ENCODE measurements at regions of chr1 and their contacts with region 1.

Region 1: GRCh38 chr1:93304716-93305138 is 41.0 kb upstream of the DR1 start:
- DNase-seq: peak; percentile 48
- H3K4me3 ChIP-seq: no peak overlapping the region
- H3K27ac ChIP-seq: no peak overlapping the region
- H3K27me3 ChIP-seq: no peaks in the 10 kb centered on the region
- CTCF ChIP-seq: peak; percentile 90

Region 2: DNA sequence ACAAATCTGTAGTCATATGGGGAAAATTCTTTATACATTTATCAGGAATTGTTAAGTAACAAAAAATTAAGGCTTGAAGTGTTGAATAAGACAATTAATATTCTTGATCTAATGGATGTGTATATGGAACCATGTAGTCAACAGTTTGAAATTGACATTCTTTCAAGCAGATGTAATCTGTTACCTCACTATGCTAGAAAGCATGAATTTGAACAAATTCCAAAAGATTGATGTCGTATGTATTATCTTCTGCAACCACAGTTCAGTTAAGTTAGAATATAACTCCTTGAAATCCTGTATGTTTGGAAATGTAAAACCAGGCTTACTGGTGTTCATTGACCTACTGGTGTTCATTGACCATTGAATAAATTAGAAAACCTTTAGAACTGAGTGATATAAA is 108.1 kb before region 1 on chr1:
- CTCF ChIA-PET with region 1: no interaction called
- POLR2A ChIA-PET with region 1: no interaction called
- DNase-seq: peak; percentile 30
- H3K4me3 ChIP-seq: no peak overlapping the region
- H3K27ac ChIP-seq: no peak overlapping the region
- H3K27me3 ChIP-seq: no peaks in the 10 kb centered on the region
- CTCF ChIP-seq: no peak

Region 3: DNA sequence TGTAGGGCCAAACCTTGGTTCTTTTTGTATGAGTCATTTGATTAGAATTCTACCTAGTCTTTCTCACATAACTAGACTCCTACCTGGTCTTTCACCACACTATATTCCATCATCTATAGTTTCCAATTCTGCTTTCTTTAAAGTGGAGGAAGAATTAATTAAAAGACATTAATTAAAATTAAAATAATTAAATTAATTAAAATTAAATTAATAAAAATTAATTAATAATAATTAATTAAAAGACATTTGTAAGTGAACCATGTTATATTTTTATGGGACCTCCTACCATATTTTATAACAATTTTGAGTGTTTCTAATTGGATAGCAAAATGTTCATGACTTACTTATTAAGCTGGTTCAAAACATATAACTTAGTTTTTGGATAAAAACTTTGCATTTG is 46.8 kb before region 1 on chr1:
- CTCF ChIA-PET with region 1: interaction called, 13 read pairs
- POLR2A ChIA-PET with region 1: no interaction called
- DNase-seq: no peak
- H3K4me3 ChIP-seq: no peak overlapping the region
- H3K27ac ChIP-seq: no peak overlapping the region
- H3K27me3 ChIP-seq: no peaks in the 10 kb centered on the region
- CTCF ChIP-seq: no peak

Region 4: DNA sequence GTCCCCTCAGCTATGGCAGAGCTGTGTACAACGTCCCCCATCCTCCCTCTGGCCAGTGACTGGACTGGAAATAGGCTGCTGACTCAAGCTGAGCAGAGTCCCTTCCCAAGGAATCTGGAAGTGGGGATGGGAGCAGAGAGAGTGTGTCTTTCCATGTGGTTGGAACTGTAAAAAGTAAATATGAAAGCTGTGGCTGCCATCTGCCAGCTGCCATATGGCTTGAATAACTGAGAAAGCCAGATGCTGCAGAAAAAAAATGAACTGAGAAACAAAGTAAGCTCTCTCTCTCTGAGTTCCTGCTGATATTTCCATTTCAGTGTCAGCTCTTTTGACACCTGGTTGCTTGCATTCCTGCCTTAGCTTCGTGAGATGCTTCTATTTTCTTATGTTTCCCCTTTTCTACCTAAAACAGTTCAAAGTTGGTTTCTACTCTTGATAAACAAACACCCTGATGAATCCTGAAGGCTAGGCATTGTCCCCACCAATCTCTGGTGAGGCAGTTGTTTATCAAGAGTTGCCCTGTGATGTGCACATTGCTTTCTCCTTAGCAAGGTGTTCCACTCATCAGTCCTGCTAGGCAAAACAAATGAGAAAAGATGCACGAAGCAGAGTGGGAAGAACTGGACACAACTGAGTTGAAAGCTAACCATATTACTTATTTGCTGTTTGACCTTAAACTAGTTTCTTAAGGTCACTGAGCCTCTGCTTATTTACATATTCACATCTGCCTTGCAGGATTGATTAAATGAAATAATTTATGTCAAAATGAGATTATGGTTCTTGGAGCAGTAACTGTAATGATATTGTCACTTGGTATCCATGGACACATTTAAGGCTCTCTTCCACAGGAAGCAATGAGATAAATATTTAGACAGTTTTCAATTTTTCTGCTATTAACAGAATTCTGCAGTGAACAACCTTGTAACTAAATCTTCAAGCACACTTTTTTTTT is 24.4 kb after region 1 on chr1:
- CTCF ChIA-PET with region 1: interaction called, 48 read pairs
- POLR2A ChIA-PET with region 1: interaction called, 3 read pairs
- DNase-seq: peak; percentile 30
- H3K4me3 ChIP-seq: no peak overlapping the region
- H3K27ac ChIP-seq: peak overlapping the region; percentile 49
- H3K27me3 ChIP-seq: no peaks in the 10 kb centered on the region
- CTCF ChIP-seq: no peak

Region 5: DNA sequence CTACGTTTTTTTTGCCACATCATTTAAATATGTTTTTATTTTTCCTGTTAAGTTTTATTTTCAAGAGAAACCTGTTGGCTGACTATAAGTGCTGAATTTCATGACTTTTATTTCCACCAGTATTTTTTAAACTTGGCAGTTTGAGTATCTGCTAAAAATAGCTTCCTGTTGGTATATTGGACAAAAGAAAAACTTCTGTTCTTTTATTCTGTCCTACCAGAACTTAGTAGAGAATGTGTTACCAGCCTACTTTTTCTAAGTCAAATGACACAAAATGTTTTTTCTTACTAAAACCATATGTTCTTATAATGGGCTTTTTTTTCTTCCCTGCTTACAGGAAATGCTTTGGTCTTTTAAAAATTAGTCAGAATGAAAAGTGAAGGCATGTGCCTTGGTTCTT is 48.6 kb after region 1 on chr1:
- CTCF ChIA-PET with region 1: interaction called, 17 read pairs
- POLR2A ChIA-PET with region 1: no interaction called
- DNase-seq: no peak
- H3K4me3 ChIP-seq: no peak overlapping the region
- H3K27ac ChIP-seq: no peak overlapping the region
- H3K27me3 ChIP-seq: no peaks in the 10 kb centered on the region
- CTCF ChIP-seq: no peak

Region 6: GRCh38 chr1:93437976-93438605 is 133.4 kb after region 1 on chr1:
- CTCF ChIA-PET with region 1: interaction called, 13 read pairs
- POLR2A ChIA-PET with region 1: no interaction called
- DNase-seq: peak; percentile 20
- H3K4me3 ChIP-seq: no peak overlapping the region
- H3K27ac ChIP-seq: no peak overlapping the region
- H3K27me3 ChIP-seq: peaks cover 17% of the 10 kb centered on the region
- CTCF ChIP-seq: peak; percentile 62

Region 7: DNA sequence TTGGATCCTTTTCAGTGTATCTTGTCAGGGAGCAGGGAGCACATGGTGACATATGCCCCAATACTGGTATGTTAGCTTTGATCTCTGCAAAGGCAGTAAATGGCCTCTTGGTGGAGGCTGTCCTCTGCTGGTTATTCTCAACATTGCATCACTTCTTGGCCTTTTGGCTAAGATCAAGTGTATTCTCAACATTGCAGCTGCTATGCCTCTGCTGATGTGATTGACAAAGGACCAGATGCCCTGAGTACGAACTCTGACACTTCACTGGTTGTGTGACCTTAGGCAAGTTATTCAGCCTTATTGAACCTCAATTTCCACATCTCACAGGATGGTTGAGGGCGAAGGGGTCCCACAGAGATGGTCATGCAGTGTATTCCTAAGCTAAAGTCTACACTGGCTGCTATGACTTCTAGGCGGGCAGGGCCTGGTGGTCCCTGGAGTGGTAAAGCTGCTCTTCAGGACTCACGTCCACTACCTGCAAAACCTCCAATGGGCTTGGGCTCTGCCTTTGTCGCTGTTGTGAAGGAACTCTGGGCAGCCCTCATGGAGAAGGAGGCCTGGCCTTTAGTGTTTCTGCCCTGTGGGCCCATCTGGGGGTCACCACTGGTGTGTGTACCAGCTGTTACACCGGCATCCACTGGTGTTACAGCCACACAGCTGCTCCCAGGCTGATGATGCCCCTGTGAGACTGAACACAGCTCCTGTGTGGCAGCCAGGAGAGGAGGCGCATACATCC is 509.5 kb after region 1 on chr1:
- CTCF ChIA-PET with region 1: interaction called, 17 read pairs
- POLR2A ChIA-PET with region 1: no interaction called
- DNase-seq: peak; percentile 53
- H3K4me3 ChIP-seq: no peak overlapping the region
- H3K27ac ChIP-seq: no peak overlapping the region
- H3K27me3 ChIP-seq: no peaks in the 10 kb centered on the region
- CTCF ChIP-seq: peak; percentile 99

Measured in AG04450 (cell line).